WTC11 (cell line): ENCODE measurements at regions of chr17 and their contacts with region 1.

Region 1: DNA sequence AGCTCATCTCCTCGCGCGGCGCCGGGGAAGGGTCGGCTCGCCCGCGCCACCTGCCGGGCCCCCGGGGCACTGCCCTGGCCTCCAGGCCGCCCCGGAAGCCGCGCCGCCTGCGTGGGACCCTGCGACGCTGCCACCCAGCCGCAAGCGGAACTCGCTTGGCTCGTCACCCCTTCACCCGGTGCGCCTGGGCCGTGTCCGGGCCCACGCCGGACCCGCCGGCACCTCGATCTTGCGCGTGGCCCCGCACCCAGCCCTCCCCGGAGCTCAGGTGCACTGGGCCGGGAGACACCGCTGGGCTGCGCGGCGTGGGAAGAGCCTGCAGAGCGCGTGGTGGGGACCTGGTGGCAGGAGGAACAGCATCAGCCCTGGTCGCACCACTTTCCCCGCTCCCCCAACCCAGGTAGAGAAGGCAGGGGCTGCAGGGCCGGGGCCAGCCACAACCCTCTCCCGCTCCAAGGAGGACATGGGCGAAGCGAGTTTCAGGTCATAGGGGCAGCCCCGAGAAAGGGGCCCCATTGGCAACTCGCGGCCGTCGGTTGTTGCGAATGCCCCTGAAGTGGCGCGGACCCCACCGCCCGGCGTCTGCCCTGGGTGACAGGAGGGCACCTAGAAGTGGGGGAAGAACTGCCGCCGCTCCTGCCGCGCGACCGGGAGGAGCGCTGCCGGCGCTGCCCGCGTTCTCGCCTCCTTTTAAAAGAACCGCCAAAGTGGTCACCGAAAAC is 363 bp upstream of the MIF4GD start:
- DNase-seq: peak; percentile 78
- ATAC-seq: peak; percentile 31
- H3K4me3 Mint-ChIP-seq: peak overlapping the region; percentile 79
- H3K27ac Mint-ChIP-seq: no peak overlapping the region
- H3K4me1 Mint-ChIP-seq: peaks cover 19% of the 10 kb centered on the region
- H3K27me3 Mint-ChIP-seq: no peaks in the 10 kb centered on the region
- CTCF ChIP-seq: peak; percentile 83

Region 2: DNA sequence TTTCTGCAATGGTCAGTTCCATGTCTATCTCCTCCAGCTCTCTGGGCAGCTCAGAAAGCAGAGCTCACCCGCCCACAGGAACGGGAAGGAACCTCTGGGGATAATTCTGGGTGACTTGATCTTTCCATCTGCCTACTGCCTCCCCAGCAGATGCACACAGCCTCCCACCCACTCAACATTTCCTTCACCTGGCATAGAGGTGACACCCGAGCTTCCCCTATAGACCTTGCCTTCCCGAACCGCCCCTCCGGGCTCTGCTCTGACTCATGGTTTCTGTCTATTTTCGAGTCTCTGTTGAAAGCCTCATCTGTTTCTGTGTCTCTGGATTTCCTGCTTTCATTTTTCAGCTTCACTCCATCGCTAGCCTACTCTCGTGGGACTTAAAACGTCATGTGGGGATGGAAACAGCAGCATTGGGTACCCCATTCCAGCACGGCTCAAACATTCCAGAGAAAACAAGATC is 21.4 kb before region 1 on chr17:
- CTCF ChIA-PET with region 1: interaction called, 39 read pairs
- POLR2A ChIA-PET with region 1: interaction called, 3 read pairs
- DNase-seq: no peak
- ATAC-seq: no peak
- H3K4me3 Mint-ChIP-seq: no peak overlapping the region
- H3K27ac Mint-ChIP-seq: peak overlapping the region; percentile 78
- H3K4me1 Mint-ChIP-seq: peaks cover 48% of the 10 kb centered on the region
- H3K27me3 Mint-ChIP-seq: no peaks in the 10 kb centered on the region
- CTCF ChIP-seq: no peak

Region 3: DNA sequence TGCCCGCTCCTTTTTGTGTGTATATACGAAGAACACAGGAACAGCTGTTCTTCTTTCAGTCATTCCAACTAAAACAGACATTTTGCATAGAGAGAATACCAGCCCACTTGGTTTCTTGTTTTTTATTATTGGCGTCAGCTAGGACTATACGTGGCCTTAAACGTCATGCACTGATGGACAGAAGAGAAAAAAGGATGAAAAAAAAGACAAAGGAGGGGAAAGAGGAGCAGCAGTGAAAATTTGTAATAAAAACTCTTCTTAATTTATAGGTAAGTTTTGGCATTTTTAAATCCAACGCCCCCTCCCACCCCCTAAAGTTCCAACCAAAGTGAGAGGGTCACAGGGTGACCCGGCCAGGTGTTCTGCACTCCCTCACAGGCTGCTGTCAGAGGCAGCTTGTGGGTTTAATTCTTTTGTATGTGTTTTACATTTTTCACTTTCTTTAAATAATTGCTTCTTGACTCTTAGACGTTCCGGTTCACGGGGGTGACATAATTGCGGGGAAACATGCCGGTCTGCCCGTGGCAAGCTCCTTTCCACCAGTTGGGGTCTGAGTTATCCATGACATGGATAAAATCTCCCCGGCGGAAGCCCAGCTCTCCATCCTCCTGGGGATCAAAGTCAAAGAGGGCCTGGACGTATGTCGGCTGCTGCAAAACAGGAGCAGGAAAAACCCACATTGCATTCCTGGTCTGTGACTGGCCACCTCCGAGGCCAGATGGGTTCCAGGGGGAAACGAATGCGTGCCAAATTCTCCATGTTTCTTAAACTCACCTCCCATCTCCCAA is 48.7 kb after region 1 on chr17:
- CTCF ChIA-PET with region 1: interaction called, 14 read pairs
- POLR2A ChIA-PET with region 1: no interaction called
- DNase-seq: no peak
- ATAC-seq: no peak
- H3K4me3 Mint-ChIP-seq: no peak overlapping the region
- H3K27ac Mint-ChIP-seq: peak overlapping the region; percentile 14; the same call in 1 of the 2 replicates
- H3K4me1 Mint-ChIP-seq: peaks cover 16% of the 10 kb centered on the region
- H3K27me3 Mint-ChIP-seq: no peaks in the 10 kb centered on the region
- CTCF ChIP-seq: no peak

Region 4: GRCh38 chr17:75345514-75346167 is 74.2 kb after region 1 on chr17:
- CTCF ChIA-PET with region 1: interaction called, 13 read pairs
- POLR2A ChIA-PET with region 1: no interaction called
- DNase-seq: peak; percentile 27
- ATAC-seq: peak; percentile 51
- H3K4me3 Mint-ChIP-seq: peak overlapping the region; percentile 67
- H3K27ac Mint-ChIP-seq: peak overlapping the region; percentile 98
- H3K4me1 Mint-ChIP-seq: peaks cover 84% of the 10 kb centered on the region
- H3K27me3 Mint-ChIP-seq: no peaks in the 10 kb centered on the region
- CTCF ChIP-seq: no peak

Region 5: GRCh38 chr17:75393523-75394331 is 122.3 kb after region 1 on chr17:
- CTCF ChIA-PET with region 1: interaction called, 30 read pairs
- POLR2A ChIA-PET with region 1: interaction called, 3 read pairs
- DNase-seq: peak; percentile 100
- ATAC-seq: peak; percentile 97
- H3K4me3 Mint-ChIP-seq: peak overlapping the region; percentile 94
- H3K27ac Mint-ChIP-seq: peak overlapping the region; percentile 95
- H3K4me1 Mint-ChIP-seq: peaks cover 42% of the 10 kb centered on the region
- H3K27me3 Mint-ChIP-seq: peaks cover 2% of the 10 kb centered on the region; the same call in 1 of the 2 replicates
- CTCF ChIP-seq: no peak

Region 6: DNA sequence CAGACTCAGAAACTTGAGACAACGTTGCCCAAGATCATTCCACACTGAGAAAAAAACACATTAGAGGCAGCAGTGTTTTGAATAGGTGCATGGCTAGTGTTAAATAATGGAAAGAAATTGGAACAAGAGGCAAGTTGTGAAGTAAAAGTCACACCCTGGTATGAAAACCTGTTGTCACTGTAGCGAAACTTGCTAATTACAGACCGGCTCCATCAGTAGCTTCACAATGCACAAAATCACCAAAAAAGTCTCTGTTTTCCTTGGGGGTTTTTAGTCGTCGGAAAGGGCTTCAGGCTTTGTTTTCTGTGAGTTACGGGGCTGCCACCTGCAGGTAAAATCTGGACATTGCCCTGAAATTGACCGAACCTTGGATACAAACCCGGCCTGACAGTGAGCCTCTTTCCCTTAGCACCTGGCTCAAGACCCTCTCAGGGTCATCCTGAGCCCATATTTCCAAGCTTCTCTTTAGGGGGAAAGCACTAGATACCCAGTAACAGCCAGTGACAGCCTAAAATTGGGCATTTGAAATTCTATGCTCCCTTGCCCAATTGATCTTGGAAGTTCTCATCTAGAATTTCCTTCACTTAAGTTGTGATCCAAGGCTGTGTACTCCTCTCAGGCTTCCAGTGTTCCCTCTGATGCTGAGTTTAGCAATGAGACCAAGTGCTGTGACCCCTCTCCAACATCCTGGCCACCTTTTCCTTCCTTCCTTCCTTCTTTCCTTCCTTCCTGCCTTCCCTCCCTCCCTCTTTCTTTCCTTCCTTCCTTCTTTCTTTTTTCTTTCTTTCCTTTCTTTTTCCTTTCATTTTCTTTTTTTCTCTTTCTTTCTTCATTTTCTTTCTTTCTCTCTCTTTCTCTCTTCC is 141.3 kb after region 1 on chr17:
- CTCF ChIA-PET with region 1: interaction called, 32 read pairs
- POLR2A ChIA-PET with region 1: no interaction called
- DNase-seq: peak; percentile 78
- ATAC-seq: peak; percentile 93
- H3K4me3 Mint-ChIP-seq: 0 out of 2 replicates have a peak overlapping the region, but pooled peaks have one; percentile 10
- H3K27ac Mint-ChIP-seq: peak overlapping the region; percentile 29; the same call in 1 of the 2 replicates
- H3K4me1 Mint-ChIP-seq: peaks cover 7% of the 10 kb centered on the region
- H3K27me3 Mint-ChIP-seq: peaks cover 9% of the 10 kb centered on the region
- CTCF ChIP-seq: peak; percentile 65

Region 7: DNA sequence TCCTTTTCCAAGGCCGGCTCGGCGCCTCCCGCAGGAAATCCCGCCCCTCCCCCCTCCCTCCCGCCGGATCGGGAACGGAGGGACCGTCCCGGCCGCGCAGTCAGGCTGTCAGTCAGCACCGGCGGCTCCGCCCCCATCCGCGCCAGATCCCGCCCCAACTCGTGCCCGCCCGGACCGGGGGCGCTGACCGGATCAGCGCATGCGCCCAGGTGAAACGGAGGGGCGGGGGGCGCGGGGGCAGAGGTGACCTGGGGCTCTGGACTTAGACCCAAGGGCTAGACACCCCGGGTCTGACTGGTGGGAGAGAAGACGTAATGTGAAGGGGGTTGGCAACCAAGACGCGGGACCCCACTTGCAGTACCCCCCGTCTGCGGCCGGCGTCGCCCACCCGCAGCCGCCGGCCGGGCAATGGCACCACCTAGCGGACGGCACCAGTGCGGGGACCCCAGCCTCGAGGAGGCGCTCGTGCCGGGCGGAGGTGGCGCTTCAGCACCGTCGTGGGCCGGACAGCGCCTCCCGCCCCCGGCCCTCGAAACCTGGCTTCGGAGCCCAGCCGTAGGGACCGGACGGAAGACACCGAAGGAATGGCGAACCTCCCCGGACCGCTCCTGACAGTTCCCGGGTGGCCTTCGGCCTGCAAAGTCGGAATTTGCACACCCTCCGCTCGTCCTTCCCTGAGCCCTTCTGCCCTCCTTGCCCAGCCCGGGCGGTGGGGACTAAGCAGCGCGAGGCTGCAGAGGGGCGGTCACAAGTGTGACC is 244.3 kb after region 1 on chr17 and contains the start of gene CASKIN2:
- CTCF ChIA-PET with region 1: interaction called, 19 read pairs
- POLR2A ChIA-PET with region 1: no interaction called
- DNase-seq: peak; percentile 98
- ATAC-seq: peak; percentile 76
- H3K4me3 Mint-ChIP-seq: peak within 1 kb of the TSS; percentile 80
- H3K27ac Mint-ChIP-seq: no peak within 1 kb of the TSS
- H3K4me1 Mint-ChIP-seq: peaks cover 20% of the 10 kb centered on the region
- H3K27me3 Mint-ChIP-seq: no peaks in the 10 kb centered on the region
- CTCF ChIP-seq: peak; percentile 90
- total RNA-seq, gene CASKIN2: 31.3 to 32.2 TPM (median 31.9 TPM) in 3 replicates